Transverse colon (tissue), 4 donors: ENCODE measurements at regions of chr17 and their contacts with region 1.

Region 1: GRCh38 chr17:15289285-15290185 is 24.4 kb upstream of the PMP22 start:
- DNase-seq: no peak
- H3K4me3 ChIP-seq: no peak overlapping the region
- H3K27ac ChIP-seq: no peak overlapping the region
- H3K4me1 ChIP-seq: peaks cover 0 to 9% (median 3%) of the 10 kb centered on the region in 4 donors
- H3K27me3 ChIP-seq: no peaks in the 10 kb centered on the region
- CTCF ChIP-seq: no peak
- EP300 ChIP-seq: no peak
- POLR2A ChIP-seq: no peak

Region 2: GRCh38 chr17:15157051-15157450 is 132.5 kb before region 1 on chr17:
- in situ Hi-C with region 1: no loop called
- intact Hi-C with region 1: no loop called
- DNase-seq: no peak
- H3K4me3 ChIP-seq: no peak overlapping the region
- H3K27ac ChIP-seq: no peak overlapping the region
- H3K4me1 ChIP-seq: no peaks in the 10 kb centered on the region
- H3K27me3 ChIP-seq: peaks cover 17% of the 10 kb centered on the region
- CTCF ChIP-seq: no peak
- EP300 ChIP-seq: no peak
- POLR2A ChIP-seq: no peak

Region 3: GRCh38 chr17:15341385-15341849 is 51.9 kb after region 1 on chr17 and contains the start of gene TEKT3:
- in situ Hi-C with region 1: loop called in 1 of 4 experiments (anchors 10 kb)
- intact Hi-C with region 1: no loop called
- DNase-seq: peak; percentile 89
- H3K4me3 ChIP-seq: peak within 1 kb of the TSS; percentile 19 to 54 (median 34)
- H3K27ac ChIP-seq: peak within 1 kb of the TSS in 3 of 4 donors; percentile 4 to 40 (median 27)
- H3K4me1 ChIP-seq: peaks cover 0 to 15% (median 6%) of the 10 kb centered on the region in 4 donors
- H3K27me3 ChIP-seq: peaks cover 16% of the 10 kb centered on the region
- CTCF ChIP-seq: no peak
- EP300 ChIP-seq: no peak
- POLR2A ChIP-seq: no peak
- total RNA-seq, gene TEKT3: 0.41 to 0.48 TPM in 2 of 4 donors, not detected in the others